Kidney (tissue), 22 donors: ENCODE measurements at regions of chr16 and their contacts with region 1.

Region 1: GRCh38 chr16:17296431-17296830 is 174.3 kb downstream of the XYLT1 start:
- DNase-seq: no peak
- H3K4me3 ChIP-seq: no peak overlapping the region
- H3K27ac ChIP-seq: no peak overlapping the region
- H3K4me1 ChIP-seq: no peaks in the 10 kb centered on the region
- H3K27me3 ChIP-seq: no peaks in the 10 kb centered on the region
- CTCF ChIP-seq: no peak

Region 2: DNA sequence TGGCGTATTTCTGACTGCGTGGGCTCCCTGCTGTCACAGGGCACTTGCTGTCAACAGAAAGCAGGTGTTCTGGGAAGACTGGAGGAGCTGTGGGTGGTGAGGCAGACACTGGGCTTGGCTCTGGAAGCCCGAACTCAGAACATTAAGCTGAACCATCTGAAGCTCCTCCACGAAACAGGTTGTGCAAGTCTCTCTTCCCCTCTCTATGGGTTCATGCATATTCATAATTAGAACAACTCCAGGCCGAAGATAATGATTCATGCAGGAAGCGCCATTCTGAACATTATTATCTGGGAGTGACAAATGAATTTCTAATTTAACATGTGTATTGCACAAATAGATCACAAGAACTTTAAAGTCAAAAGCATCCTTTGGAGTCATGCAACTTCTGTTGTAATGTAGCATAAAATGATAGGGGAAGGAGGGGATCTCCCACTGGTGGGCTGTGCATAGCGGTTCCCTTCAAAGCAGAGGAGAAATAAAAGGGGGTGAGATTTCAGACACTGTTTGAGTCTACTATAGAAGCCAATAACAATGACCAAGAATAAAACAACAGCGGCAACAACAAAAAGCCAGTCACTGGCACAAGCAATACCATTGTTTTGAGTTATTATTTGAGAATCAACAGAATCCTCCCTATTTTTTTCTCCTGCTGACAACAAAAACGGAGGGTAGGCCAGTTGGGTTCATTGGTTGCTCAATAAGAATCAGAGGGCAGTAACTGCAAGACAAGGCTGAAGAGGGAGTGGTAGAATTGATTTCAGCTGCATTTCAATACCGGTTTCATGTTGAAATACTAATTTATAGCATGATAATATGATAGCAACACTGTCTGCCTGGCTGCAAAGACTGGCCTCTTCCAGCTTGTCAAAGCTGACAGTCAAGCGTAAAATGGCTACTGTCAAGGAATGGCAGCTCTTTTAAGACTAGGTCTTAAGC is 233.0 kb before region 1 on chr16:
- intact Hi-C with region 1: loop called (anchors 10 kb)
- DNase-seq: no peak
- H3K4me3 ChIP-seq: no peak overlapping the region
- H3K27ac ChIP-seq: no peak overlapping the region
- H3K4me1 ChIP-seq: no peaks in the 10 kb centered on the region
- H3K27me3 ChIP-seq: no peaks in the 10 kb centered on the region
- CTCF ChIP-seq: no peak

Region 3: DNA sequence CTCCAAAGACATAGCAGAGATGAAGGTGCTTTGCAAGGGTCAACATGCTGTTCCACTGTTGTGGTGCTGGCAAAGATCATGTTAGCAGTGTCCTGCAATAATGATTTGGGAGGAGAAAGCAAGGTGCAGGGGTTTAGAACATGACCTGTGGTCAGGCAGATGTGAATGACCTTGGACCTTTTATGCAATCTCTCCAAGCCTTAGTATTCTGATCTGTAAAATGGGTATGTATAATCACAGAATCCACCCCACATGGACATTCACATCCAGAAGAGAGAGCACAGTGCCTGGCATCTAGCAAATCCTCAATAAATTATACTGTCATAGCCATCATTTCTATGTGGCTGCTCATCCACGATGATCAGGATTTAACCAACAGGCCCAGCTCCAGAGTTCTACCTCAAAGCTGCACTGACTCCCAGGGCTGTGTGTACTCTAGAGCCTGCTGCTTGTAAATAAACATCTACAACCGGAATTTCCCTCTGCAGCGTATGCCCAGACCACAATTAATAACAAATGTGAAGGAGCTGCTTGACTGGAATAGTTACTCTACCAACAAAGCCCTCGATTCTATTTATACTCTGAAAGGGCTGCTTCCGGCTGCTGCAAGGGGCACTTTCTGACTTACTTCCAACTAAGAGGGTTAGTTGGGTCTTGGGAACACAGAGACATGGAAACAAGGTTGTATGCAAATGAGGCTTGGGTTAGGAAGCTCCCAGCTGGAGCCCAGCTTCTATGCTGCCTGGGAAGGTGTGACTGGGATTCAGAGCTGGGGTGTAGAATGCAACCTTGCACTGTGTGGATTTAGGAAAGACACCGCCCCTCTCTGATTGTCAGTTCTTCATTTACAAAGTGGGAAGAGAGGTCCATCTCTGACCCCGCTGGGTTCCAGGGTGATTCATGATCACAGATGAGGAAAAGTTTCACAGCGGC is 90.9 kb before region 1 on chr16:
- intact Hi-C with region 1: no loop called
- DNase-seq: peak in 2 of 5 donors; percentile 16 to 21
- H3K4me3 ChIP-seq: no peak overlapping the region
- H3K27ac ChIP-seq: no peak overlapping the region
- H3K4me1 ChIP-seq: peaks cover 0 to 4% (median 0%) of the 10 kb centered on the region in 3 donors
- H3K27me3 ChIP-seq: no peaks in the 10 kb centered on the region
- CTCF ChIP-seq: no peak